PC-9 (cell line): ENCODE measurements at regions of chr6 and their contacts with region 1.

Region 1: DNA sequence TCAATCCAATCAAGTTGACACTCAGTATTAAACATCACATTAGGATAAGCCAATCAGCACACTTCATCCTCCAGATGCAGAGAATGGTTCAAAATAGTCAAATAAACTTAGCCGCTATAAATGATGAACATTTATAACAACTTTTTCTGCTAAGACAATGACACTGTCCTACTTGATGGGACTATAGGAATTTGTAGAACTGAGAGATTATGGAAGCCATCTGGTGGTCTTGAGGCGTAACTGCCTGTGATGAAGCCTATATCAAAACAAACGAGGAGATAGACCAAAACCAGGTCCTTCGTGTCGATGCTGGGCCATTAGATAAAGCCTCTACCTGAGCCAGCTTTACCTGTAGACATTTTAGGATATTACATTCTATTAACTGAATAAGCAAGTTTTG is 631.1 kb downstream of the COL12A1 start:
- DNase-seq: no peak
- H3K4me3 ChIP-seq: no peak overlapping the region
- H3K27ac ChIP-seq: no peak overlapping the region
- H3K4me1 ChIP-seq: peaks cover 8% of the 10 kb centered on the region
- H3K27me3 ChIP-seq: no peaks in the 10 kb centered on the region
- CTCF ChIP-seq: peak; percentile 69

Region 2: DNA sequence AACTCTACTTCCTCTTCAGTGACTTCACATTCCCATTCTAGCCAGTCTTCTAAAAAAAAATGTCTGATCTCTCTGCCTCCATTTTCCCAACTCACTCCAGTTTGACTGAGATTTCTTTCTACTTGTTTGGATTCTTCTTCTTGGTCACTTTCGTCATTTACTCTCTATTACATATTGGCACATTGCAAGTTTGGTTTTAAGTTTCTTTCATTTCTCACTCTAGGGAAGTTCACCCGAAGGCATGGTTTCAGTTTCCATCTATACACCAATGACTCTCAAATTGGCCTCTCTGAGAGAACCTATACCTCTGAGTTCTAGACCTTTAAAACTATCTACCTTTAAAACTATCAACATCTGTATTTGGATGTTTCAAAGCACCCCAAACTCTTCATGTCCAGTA is 827.5 kb before region 1 on chr6:
- CTCF ChIA-PET with region 1: no interaction called
- POLR2A ChIA-PET with region 1: no interaction called
- intact Hi-C with region 1: loop called (anchors 10 kb)
- DNase-seq: no peak
- H3K4me3 ChIP-seq: no peak overlapping the region
- H3K27ac ChIP-seq: no peak overlapping the region
- H3K4me1 ChIP-seq: 0 out of 2 replicates have a peak, but pooled peaks cover 4% of the 10 kb centered on the region
- H3K27me3 ChIP-seq: no peaks in the 10 kb centered on the region
- CTCF ChIP-seq: no peak